ENCODE measurements at regions of chr15 and their contacts with region 1.

Region 1: DNA sequence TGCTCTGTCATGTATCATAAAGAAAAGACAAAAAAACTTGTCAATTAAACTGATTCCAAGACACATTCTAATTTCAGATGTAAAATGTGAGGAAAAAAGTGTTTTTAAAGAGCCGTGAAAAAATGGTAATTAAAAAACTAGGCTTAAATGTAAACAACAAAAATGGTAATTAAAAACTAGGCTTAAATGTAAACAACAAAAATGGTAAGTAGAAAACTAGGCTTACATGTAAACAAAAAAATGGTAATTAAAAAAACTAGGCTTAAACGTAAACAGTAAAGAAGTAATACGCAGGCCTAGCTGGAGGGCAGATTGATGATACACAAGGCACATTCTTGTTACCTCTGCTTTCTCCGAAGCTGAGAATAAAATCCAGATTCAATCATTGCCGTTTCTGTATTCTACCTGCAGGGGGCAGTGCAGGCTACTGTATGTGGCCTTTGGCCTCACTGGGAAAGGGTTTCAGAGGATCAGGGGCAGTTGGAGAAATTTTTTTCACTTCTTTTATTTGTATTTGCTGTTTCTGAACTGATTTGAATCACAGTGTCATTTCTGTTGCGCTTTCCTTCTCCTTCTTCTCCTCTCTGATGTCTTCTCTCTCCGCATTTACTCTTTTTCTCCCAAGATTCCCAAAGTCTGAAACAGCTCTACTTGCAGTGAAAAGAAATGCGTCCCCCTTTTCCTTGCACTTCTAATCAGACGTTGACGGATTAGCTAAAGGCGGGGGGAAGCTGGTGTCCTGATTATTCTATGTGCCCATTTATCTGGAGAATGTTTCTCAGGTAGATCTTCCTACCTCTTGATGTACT is 67.2 kb upstream of the MCTP2 start:
- DNase-seq: no peak

Region 2: DNA sequence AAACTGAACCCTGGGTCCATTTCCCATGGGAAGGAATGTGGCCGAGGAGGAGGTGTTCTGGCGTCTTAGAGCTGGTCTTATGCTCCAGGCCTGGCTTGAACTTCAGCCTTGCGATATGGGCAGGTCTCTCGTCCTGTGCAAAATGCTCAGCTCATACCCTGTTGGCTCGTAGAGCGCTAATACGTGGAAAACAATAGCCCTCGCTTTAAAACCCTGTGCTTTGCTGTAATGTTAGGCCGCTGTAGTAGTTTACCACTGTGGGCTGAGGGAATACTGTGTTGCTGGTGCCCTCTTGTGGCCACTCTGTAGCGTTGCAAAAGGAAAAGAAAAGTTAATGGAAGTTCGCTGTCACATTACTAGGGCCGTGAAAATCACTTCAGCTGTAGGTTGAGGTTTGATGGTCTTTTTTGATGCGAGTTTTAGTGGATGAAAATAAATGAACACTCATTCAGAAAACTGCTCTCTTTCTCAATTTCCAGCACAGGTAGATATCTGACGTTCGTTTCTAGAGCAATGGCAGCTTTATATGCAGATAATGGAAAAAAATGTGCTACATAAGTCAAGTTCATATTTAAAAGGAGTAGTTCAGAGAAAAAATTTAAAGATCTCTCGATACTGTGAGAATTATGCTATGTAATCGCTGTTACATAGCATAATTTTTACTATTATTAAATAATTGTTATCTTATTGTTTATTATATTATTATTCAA is 160.1 kb after region 1 on chr15:
- intact Hi-C with region 1: loop called (anchors 5 kb)
- DNase-seq: no peak

Measured in cardiac septum (tissue), 1 donor.